OCI-LY7 (cell line): ENCODE measurements at regions of chr4 and their contacts with region 1.

Region 1: GRCh38 chr4:40309250-40309774 is 25.8 kb upstream of the CHRNA9 start:
- DNase-seq: peak; percentile 90
- H3K4me3 ChIP-seq: peak overlapping the region; percentile 58
- H3K27ac ChIP-seq: peak overlapping the region; percentile 90
- H3K4me1 ChIP-seq: peaks cover 55% of the 10 kb centered on the region
- CTCF ChIP-seq: peak; percentile 96

Region 2: DNA sequence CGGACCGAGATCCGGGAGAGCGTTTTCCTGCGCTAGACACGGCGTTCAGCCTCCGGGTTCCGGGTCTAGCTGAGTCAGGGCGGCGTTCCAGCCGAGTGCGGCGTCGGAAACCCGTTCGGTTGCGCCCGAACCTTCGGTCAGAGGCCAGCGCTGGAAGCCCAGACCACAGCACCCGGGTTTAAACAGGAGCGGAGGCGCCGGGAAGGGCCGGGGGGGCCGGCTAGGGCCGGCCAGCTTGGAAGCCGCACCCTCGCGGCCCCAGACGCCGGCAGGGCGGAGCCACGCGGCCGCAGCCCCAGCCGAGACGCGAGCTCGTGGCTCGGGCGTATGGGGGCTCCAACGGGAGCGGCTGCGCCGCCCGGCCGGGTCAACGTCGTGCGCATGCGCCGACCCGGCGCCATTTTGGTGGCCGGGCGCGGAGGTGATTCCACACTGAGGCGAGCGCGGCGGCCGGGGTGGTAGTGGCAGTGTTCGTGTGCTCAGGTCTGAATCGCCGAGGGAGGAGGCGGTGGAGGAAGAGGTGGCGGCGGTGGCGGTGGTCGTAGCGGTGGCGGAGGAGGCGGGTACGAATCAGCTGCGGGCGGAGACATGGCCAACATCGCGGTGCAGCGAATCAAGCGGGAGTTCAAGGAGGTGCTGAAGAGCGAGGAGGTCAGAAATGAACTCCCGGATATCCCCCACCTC is 611.4 kb before region 1 on chr4 and contains the start of gene UBE2K:
- CTCF ChIA-PET with region 1: no interaction called
- POLR2A ChIA-PET with region 1: no interaction called
- intact Hi-C with region 1: loop called (anchors 5 kb)
- DNase-seq: peak; percentile 93
- H3K4me3 ChIP-seq: peak within 1 kb of the TSS; percentile 98
- H3K27ac ChIP-seq: peak within 1 kb of the TSS; percentile 74
- H3K4me1 ChIP-seq: peaks cover 29% of the 10 kb centered on the region
- CTCF ChIP-seq: no peak
- total RNA-seq, gene UBE2K: 20.8 and 47.7 TPM in 2 replicates

Region 3: GRCh38 chr4:40056716-40057585 is 252.4 kb before region 1 on chr4 and contains the start of gene N4BP2:
- CTCF ChIA-PET with region 1: interaction called, 11 read pairs
- POLR2A ChIA-PET with region 1: interaction called, 6 read pairs
- intact Hi-C with region 1: loop called (anchors 2 kb)
- DNase-seq: peak; percentile 92
- H3K4me3 ChIP-seq: peak within 1 kb of the TSS; percentile 79
- H3K27ac ChIP-seq: peak within 1 kb of the TSS; percentile 79
- H3K4me1 ChIP-seq: peaks cover 38% of the 10 kb centered on the region
- CTCF ChIP-seq: peak; percentile 76
- total RNA-seq, gene N4BP2: 11.4 and 12.5 TPM in 2 replicates

Region 4: GRCh38 chr4:40185830-40186664 is 123.3 kb before region 1 on chr4:
- CTCF ChIA-PET with region 1: no interaction called
- POLR2A ChIA-PET with region 1: interaction called, 48 read pairs
- intact Hi-C with region 1: loop called (anchors 2 kb)
- DNase-seq: peak; percentile 83
- H3K4me3 ChIP-seq: peak overlapping the region; percentile 51
- H3K27ac ChIP-seq: peak overlapping the region; percentile 94
- H3K4me1 ChIP-seq: peaks cover 95% of the 10 kb centered on the region
- CTCF ChIP-seq: no peak

Region 5: GRCh38 chr4:40199999-40200874 is 109.1 kb before region 1 on chr4:
- CTCF ChIA-PET with region 1: interaction called, 3 read pairs
- POLR2A ChIA-PET with region 1: interaction called, 31 read pairs
- intact Hi-C with region 1: loop called (anchors 1 kb)
- DNase-seq: peak; percentile 83
- H3K4me3 ChIP-seq: peak overlapping the region; percentile 79
- H3K27ac ChIP-seq: peak overlapping the region; percentile 93
- H3K4me1 ChIP-seq: peaks cover 51% of the 10 kb centered on the region
- CTCF ChIP-seq: no peak

Region 6: GRCh38 chr4:40247350-40247749 is 62.0 kb before region 1 on chr4:
- CTCF ChIA-PET with region 1: interaction called, 3 read pairs
- POLR2A ChIA-PET with region 1: no interaction called
- intact Hi-C with region 1: loop called (anchors 10 kb)
- DNase-seq: peak; percentile 33
- H3K4me3 ChIP-seq: no peak overlapping the region
- H3K27ac ChIP-seq: no peak overlapping the region
- H3K4me1 ChIP-seq: no peaks in the 10 kb centered on the region
- CTCF ChIP-seq: no peak